CD8-positive, alpha-beta T cell (primary cell): ENCODE measurements at regions of chr11 and their contacts with region 1.

Region 1: DNA sequence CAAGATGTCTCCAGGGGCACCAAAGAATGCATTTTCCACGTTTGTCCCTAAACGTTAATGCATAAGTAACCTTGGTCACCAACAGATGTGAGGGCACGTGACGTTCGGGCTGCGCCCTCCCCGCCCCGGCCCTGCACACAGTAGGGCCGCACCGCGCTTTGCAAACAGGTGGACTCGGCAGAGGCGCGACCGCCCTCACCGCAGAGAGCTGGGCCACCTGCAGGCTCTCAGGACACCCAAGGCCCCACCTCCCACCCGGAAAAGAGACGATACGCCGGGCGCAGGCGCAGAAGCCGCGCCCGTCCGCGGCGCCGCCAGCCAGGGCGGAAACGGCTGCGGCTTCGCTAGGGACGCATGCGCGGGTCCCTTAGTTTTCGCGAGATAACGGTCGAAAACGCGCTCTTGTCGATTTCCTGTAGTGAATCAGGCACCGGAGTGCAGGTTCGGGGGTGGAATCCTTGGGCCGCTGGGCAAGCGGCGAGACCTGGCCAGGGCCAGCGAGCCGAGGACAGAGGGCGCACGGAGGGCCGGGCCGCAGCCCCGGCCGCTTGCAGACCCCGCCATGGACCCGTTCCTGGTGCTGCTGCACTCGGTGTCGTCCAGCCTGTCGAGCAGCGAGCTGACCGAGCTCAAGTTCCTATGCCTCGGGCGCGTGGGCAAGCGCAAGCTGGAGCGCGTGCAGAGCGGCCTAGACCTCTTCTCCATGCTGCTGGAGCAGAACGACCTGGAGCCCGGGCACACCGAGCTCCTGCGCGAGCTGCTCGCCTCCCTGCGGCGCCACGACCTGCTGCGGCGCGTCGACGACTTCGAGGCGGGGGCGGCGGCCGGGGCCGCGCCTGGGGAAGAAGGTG is at the start of gene FADD:
- DNase-seq: peak; percentile 82 to 97 (median 91)
- ATAC-seq: peak; percentile 56
- H3K4me3 ChIP-seq: peak within 1 kb of the TSS; percentile 81 to 97
- H3K4me3 Mint-ChIP-seq: peak within 1 kb of the TSS; percentile 92
- H3K27ac ChIP-seq: peak within 1 kb of the TSS; percentile 92 to 95
- H3K27ac Mint-ChIP-seq: peak within 1 kb of the TSS; percentile 98
- H3K4me1 ChIP-seq: peaks cover 34% of the 10 kb centered on the region
- H3K4me1 Mint-ChIP-seq: peaks cover 45% of the 10 kb centered on the region
- H3K27me3 ChIP-seq: no peaks in the 10 kb centered on the region
- H3K27me3 Mint-ChIP-seq: no peaks in the 10 kb centered on the region
- CTCF ChIP-seq: no peak
- total RNA-seq, gene FADD: 10.5 to 11.0 TPM

Region 2: GRCh38 chr11:69048718-69049489 is 1154.2 kb before region 1 on chr11 and contains the start of gene TPCN2:
- CTCF ChIA-PET with region 1: no interaction called
- POLR2A ChIA-PET with region 1: interaction called, 3 read pairs
- intact Hi-C with region 1: loop called (anchors 5 to 10 kb)
- DNase-seq: peak; percentile 79 to 98 (median 89)
- ATAC-seq: peak; percentile 98
- H3K4me3 ChIP-seq: peak within 1 kb of the TSS; percentile 61 to 70
- H3K4me3 Mint-ChIP-seq: peak within 1 kb of the TSS; percentile 79
- H3K27ac ChIP-seq: peak within 1 kb of the TSS; percentile 74 to 91
- H3K27ac Mint-ChIP-seq: peak within 1 kb of the TSS; percentile 92
- H3K4me1 ChIP-seq: peaks cover 9% of the 10 kb centered on the region
- H3K4me1 Mint-ChIP-seq: peaks cover 28% of the 10 kb centered on the region
- H3K27me3 ChIP-seq: no peaks in the 10 kb centered on the region
- H3K27me3 Mint-ChIP-seq: no peaks in the 10 kb centered on the region
- CTCF ChIP-seq: no peak
- total RNA-seq, gene TPCN2: 13.1 to 15.0 TPM

Region 3: DNA sequence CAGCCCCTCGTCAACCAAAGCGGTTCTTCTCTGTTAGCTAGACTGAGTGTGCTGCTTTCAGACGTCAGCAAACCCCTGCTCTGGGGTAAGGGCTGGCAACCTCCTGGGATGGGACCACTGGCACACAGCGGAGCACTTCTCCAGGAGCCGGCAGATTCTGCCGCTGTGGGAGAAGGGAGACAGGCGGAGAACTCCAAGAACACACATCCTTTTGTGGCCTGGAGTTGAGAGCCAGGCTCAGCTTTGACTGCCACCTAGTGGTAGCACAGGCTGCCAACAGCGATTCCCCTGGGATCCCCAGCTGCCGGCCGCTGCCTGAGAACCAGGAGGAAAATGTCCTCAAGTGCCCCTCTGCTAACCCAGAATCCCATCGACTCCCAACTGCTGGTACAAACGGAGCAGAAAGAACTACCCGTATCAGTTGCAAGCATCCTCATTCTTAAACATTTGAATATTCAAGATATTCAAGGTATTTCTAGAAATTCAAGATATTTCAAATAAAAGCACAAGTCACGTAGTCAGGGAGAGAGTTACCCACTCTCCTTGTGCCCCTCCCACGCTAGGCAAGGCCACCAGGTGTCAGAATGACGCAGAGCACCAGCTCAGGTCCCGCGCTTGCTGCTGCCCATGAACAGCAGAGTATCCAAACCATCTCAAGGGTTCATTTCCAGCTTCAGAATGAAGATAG is 532.8 kb before region 1 on chr11:
- CTCF ChIA-PET with region 1: no interaction called
- POLR2A ChIA-PET with region 1: interaction called, 3 read pairs
- intact Hi-C with region 1: loop called in 1 of 2 experiments (anchors 5 kb)
- DNase-seq: peak; percentile 27 to 74 (median 61)
- ATAC-seq: peak; percentile 21
- H3K4me3 ChIP-seq: no peak overlapping the region
- H3K4me3 Mint-ChIP-seq: no peak overlapping the region
- H3K27ac ChIP-seq: no peak overlapping the region
- H3K27ac Mint-ChIP-seq: peak overlapping the region; percentile 62
- H3K4me1 ChIP-seq: peaks cover 23% of the 10 kb centered on the region
- H3K4me1 Mint-ChIP-seq: peaks cover 31% of the 10 kb centered on the region
- H3K27me3 ChIP-seq: no peaks in the 10 kb centered on the region
- H3K27me3 Mint-ChIP-seq: no peaks in the 10 kb centered on the region
- CTCF ChIP-seq: peak; percentile 74

Region 4: DNA sequence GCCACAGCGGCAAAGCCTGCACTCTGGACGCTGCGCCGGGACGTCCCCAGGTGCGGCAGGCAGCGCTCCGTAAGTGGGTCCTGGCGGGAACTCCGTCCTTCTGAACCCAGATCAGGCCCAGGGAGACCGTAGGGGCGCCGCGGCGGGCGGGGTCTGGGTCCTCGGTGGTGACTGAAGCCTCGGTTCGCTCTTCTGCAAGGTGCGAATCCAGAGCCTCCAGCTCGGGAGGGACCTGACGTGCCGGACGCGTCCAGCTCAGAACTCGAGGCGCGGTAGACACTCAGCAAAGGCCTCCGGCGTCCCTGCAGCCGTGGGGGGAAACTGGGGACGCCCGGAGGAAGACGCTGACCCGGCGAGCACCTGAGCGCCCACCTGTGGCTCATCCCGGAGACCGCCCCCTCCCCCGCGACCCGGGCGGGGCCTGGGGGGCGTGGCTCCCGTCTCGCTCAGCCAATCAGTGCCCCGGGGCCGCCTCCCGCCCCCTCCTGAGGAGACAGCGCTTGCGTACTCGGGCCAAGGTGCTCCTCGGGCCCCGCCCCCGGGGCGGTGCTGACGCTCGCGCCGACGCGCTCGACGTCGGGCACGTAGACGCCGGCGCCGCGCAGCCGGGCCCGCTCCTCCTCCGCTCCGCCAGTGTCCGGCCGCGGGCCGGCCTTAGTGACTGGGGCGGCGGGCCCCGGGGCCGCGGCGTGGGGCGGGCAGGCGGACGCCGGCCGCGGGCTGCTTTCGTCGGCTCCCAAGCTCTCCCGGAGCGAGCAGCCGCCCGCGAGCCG is 67.2 kb after region 1 on chr11 and contains the start of gene PPFIA1:
- CTCF ChIA-PET with region 1: no interaction called
- POLR2A ChIA-PET with region 1: interaction called, 4 read pairs
- intact Hi-C with region 1: loop called (anchors 1 kb)
- DNase-seq: peak; percentile 89 to 98 (median 96)
- ATAC-seq: peak; percentile 96
- H3K4me3 ChIP-seq: peak within 1 kb of the TSS; percentile 88 to 90
- H3K4me3 Mint-ChIP-seq: peak within 1 kb of the TSS; percentile 89
- H3K27ac ChIP-seq: peak within 1 kb of the TSS; percentile 53 to 55
- H3K27ac Mint-ChIP-seq: peak within 1 kb of the TSS; percentile 84
- H3K4me1 ChIP-seq: peaks cover 10% of the 10 kb centered on the region
- H3K4me1 Mint-ChIP-seq: peaks cover 44% of the 10 kb centered on the region
- H3K27me3 ChIP-seq: peaks cover 0 to 6% of the 10 kb centered on the region in 2 experiments
- H3K27me3 Mint-ChIP-seq: peaks cover 13% of the 10 kb centered on the region
- CTCF ChIP-seq: peak; percentile 2
- total RNA-seq, gene PPFIA1: 36.3 to 40.4 TPM

Region 5: DNA sequence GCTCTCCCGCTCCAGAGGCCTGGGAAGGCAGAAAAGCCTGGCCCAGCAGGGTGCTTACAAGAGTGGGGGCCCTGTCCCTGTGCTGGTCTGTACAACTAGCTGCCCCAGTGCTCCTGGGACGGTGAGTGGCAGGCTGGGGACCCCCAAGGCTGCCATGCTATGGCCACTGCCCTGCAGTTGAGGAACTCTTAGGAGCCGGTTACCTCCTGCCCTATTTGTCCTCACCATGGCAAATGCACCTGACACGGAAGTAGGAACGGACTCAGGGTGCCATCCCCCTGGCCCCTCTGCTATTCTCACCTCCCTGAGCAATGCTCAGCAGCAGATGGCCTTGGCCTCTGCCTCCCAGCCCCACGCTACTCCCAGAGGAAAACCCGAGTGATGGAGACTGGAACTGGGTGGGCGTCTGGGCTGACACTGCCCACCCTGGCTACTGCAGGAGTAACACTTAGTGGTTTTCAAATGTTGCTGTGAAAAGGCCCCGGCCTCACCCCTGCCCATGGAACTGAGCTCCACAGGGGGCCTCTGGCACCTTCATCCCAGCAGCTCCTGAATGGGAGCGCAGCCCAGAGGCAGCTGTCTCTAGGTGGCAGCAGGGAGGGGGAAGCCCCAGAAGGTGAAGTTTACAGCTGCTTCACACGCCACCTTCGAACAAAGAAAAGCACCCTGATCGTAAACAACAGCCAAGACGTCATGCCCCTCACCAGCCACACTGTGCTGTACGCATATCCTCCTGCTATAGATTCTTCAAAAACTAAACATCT is 300.5 kb after region 1 on chr11:
- CTCF ChIA-PET with region 1: no interaction called
- POLR2A ChIA-PET with region 1: no interaction called
- intact Hi-C with region 1: no loop called
- DNase-seq: no peak
- ATAC-seq: no peak
- H3K4me3 ChIP-seq: no peak overlapping the region
- H3K4me3 Mint-ChIP-seq: no peak overlapping the region
- H3K27ac ChIP-seq: no peak overlapping the region
- H3K27ac Mint-ChIP-seq: no peak overlapping the region
- H3K4me1 ChIP-seq: no peaks in the 10 kb centered on the region
- H3K4me1 Mint-ChIP-seq: no peaks in the 10 kb centered on the region
- H3K27me3 ChIP-seq: no peaks in the 10 kb centered on the region
- H3K27me3 Mint-ChIP-seq: peaks cover 3% of the 10 kb centered on the region
- CTCF ChIP-seq: no peak